AG04450 (cell line): ENCODE measurements at regions of chr19 and their contacts with region 1.

Region 1: DNA sequence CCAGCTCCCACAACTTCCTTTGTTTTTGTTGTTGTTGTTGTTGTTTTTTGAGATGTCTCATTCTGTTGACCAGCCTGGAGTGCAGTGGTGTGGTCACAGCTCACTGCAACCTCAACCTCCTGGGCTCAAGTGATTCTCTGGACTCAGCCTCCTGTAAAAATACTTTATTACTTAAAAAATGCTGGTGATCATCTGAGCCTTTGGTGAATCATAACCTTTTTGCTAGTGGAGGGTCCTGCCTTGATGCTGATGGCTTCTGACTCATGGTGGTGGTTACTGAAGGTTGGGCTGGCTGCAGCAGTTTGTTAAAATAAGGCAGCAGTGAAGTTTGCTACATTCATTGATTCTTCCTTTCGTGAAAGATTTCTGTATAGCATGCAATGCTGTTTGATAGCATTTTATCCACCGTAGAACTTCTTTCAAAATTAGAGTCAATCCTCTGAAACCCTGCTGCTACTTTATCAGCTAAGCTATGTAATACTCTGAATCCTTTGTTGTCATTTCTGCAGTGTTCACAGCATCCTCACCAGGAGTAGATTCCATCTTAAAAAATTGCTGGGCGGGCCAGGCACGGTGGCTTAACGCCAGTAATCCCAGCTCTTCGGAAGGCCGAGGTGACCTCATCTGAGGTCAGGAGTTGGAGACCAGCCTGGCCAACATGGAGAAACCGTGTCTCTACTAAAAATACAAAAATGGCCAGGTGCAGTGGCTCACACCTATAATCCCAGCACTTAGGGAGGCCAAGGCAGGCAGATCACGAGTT is 18.0 kb downstream of the ARHGAP35 start:
- DNase-seq: peak; percentile 66
- H3K4me3 ChIP-seq: no peak overlapping the region
- H3K27ac ChIP-seq: peak overlapping the region; percentile 89
- H3K27me3 ChIP-seq: no peaks in the 10 kb centered on the region
- CTCF ChIP-seq: no peak

Region 2: DNA sequence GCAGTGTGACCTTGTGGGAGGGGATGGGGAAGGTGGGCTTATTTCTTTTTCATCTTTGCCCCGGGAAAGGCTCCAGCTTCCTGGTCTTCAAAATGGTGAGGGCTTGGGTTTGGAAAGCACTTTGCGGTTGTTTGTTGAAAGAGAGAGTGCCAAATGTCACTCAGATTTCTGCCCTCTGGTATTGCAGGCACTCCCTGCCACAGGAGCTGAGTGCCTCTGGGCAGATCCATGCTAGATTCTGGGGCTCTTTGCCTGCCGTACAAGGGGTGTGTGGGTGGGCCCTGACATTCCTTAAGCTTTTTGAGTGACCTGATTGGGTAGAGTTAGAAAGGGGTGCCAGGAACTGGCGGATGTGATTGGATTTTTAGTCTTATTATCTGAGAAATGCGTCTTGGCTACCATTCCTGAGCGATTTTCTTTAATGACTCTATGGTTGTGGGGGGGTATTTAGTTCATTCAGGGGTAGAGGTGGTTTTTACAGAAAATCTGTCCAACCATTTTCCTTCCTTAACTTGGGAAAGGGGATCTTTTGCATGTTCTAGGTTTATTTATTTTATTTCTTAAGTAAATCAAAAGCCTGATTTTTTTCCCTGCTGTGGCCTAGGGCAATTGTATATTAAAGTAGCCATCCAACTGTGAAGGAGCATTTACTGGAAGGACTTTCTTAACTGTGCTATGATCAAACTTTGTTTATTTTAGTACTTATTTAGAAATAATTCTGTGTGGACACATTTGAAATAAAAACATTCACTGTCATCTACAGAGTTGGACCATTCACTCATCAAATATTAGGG is 14.8 kb before region 1 on chr19:
- CTCF ChIA-PET with region 1: no interaction called
- POLR2A ChIA-PET with region 1: no interaction called
- DNase-seq: no peak
- H3K4me3 ChIP-seq: peak overlapping the region; percentile 83
- H3K27ac ChIP-seq: peak overlapping the region; percentile 57
- H3K27me3 ChIP-seq: no peaks in the 10 kb centered on the region
- CTCF ChIP-seq: no peak

Region 3: GRCh38 chr19:46906221-46906620 is 27.4 kb after region 1 on chr19:
- CTCF ChIA-PET with region 1: no interaction called
- POLR2A ChIA-PET with region 1: no interaction called
- DNase-seq: no peak
- H3K4me3 ChIP-seq: no peak overlapping the region
- H3K27ac ChIP-seq: no peak overlapping the region
- H3K27me3 ChIP-seq: no peaks in the 10 kb centered on the region
- CTCF ChIP-seq: no peak

Region 4: DNA sequence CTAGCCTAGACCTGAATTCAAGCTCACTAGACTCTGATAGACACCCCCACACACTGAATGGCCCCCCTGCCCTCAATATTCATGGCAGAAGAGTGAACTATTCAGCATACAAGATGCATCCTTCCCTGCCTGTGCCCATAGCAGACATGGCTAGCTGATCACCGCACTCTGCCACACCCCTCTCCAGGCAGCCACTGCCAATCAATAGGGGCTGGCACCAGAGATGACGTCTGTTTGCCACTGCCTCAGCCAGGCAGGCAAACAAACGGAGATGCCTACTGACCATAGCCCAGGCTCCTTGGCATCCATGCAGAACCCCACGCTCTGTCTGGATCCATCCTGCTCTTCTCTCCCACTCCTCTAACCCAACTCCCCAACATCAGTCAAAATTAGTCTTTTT is 127.1 kb after region 1 on chr19:
- CTCF ChIA-PET with region 1: no interaction called
- POLR2A ChIA-PET with region 1: interaction called, 10 read pairs
- DNase-seq: no peak
- H3K4me3 ChIP-seq: no peak overlapping the region
- H3K27ac ChIP-seq: no peak overlapping the region
- H3K27me3 ChIP-seq: no peaks in the 10 kb centered on the region
- CTCF ChIP-seq: no peak

Region 5: DNA sequence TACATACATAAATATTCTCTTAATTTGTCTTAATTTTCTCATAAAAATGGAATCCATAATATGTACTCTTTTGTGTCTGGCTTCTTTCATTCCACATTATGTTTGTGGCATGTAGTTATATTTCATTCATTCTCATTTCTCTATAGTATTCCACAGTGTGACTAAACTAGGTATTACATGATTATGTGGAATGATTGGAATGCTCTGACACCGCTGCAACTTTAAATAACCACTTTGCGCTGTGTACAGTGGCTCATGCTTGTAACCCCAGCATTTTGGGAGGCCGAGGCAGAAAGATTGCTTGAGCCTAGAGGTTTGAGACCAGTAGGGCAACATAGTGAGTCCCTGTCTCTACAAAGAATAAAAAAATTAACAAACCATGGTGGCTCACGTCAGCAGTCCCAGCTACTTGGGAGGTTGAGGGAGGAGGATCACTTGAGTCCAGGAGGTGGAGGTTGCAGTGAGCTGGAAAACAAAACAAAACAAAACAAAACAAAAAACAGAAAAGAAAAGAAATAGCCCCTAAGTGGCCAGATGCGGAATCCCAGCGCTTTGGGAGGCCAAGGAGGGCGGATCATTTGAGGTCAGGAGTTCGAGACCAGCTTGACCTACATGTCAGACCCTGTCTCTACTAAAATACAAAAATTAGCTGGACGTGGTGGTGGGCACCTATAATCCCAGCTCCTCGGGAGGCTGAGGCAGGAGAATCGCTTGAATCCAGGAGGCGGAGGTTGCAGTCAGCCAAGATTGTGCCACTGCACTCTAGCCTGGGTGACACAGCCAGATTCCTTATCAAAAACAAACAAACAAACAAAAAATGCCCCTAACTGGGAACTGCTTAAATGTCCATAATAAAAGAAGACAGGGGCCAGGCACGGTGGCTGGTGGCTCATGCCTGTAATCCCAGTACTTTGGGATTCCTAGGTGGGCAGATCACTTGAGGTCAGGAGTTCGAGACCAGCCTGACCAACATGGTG is 243.9 kb after region 1 on chr19:
- CTCF ChIA-PET with region 1: no interaction called
- POLR2A ChIA-PET with region 1: no interaction called
- DNase-seq: no peak
- H3K4me3 ChIP-seq: no peak overlapping the region
- H3K27ac ChIP-seq: peak overlapping the region; percentile 65
- H3K27me3 ChIP-seq: no peaks in the 10 kb centered on the region
- CTCF ChIP-seq: no peak